CD8-positive, alpha-beta memory T cell (primary cell): ENCODE measurements at regions of chr14 and their contacts with region 1.

Region 1: GRCh38 chr14:95993768-95994592 is 45.2 kb upstream of the C14orf132 start:
- DNase-seq: peak in 2 of 5 donors; percentile 7 to 28
- H3K4me3 ChIP-seq: no peak overlapping the region
- H3K4me3 Mint-ChIP-seq: no peak overlapping the region
- H3K27ac ChIP-seq: no peak overlapping the region
- H3K27ac Mint-ChIP-seq: no peak overlapping the region
- H3K4me1 ChIP-seq: no peaks in the 10 kb centered on the region
- H3K4me1 Mint-ChIP-seq: no peaks in the 10 kb centered on the region
- H3K27me3 ChIP-seq: peaks cover 7% of the 10 kb centered on the region
- H3K27me3 Mint-ChIP-seq: peaks cover 18 to 44% of the 10 kb centered on the region in 2 donors

Region 2: GRCh38 chr14:95561001-95561412 is 433.0 kb before region 1 on chr14:
- CTCF ChIA-PET with region 1: interaction called, 16 read pairs
- POLR2A ChIA-PET with region 1: no interaction called
- DNase-seq: peak; percentile 63 to 87 (median 66)
- H3K4me3 ChIP-seq: no peak overlapping the region
- H3K4me3 Mint-ChIP-seq: no peak overlapping the region
- H3K27ac ChIP-seq: no peak overlapping the region
- H3K27ac Mint-ChIP-seq: peak overlapping the region in 1 of 8 donors; percentile 24
- H3K4me1 ChIP-seq: peaks cover 8% of the 10 kb centered on the region
- H3K4me1 Mint-ChIP-seq: peaks cover 4 to 6% (median 6%) of the 10 kb centered on the region in 3 donors
- H3K27me3 ChIP-seq: no peaks in the 10 kb centered on the region
- H3K27me3 Mint-ChIP-seq: peaks cover 8 to 14% of the 10 kb centered on the region in 2 donors

Region 3: DNA sequence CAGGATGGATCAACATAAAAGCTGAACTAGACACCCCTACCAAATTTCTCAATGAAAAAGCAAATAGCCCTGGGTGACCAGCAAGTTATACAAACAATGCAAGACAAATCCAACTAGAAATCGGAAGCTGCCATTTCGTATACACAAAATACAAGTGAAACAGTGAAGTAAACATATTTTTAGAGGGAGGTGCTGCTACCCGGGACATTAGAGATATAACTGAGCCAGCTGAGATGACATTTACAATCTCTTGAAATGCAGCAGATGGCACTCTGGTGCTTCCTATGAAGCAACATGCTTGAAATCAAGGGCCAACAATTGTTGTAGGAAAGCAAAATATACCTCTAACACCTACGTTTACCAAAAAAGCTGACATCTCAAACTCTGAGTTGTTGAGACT is 287.5 kb after region 1 on chr14:
- CTCF ChIA-PET with region 1: no interaction called
- POLR2A ChIA-PET with region 1: no interaction called
- DNase-seq: no peak
- H3K4me3 ChIP-seq: no peak overlapping the region
- H3K4me3 Mint-ChIP-seq: no peak overlapping the region
- H3K27ac ChIP-seq: no peak overlapping the region
- H3K27ac Mint-ChIP-seq: no peak overlapping the region
- H3K4me1 ChIP-seq: no peaks in the 10 kb centered on the region
- H3K4me1 Mint-ChIP-seq: no peaks in the 10 kb centered on the region
- H3K27me3 ChIP-seq: no peaks in the 10 kb centered on the region
- H3K27me3 Mint-ChIP-seq: peaks cover 0 to 3% of the 10 kb centered on the region in 2 donors